ENCODE measurements at regions of chr22 and their contacts with region 1.

Region 1: DNA sequence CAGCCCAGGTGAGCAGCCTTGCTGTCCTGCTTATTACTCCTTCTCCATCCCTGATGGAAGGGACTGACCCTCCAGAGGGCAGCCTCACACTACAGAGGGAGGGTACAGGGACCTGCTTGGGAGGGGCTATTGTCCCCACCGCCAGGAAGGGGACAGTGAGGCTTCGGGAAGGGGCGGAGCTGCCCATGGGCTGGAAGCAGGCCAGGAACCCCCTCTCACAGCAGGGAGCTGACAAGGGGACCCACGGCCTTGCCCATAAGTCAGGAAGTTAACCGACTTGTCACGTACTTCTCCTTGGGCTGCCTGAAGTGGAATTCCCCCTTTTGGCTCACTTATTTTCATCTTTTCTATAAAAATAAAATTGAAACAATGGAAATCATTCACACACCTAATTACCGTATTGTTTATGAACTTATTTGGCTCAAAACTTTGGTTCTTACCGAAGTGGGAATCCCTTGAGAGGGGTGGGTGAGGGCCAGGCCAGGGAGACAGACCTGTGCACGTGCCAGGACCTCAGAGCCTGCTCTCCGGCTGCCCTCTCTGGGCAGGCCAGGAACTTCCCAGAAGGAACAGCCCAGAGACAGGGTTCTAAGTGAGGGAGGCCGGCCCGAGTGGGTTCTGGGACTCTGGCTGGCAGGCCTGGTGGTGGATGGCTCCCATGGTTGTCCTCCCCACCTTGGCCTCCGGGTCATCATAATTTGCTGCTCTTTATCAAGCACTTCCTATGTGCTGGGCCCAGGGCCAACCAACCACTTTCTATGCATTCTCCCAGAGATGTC is 5.8 kb downstream of the MGAT3 start:
- DNase-seq: peak; percentile 52 to 83 (median 67)
- ATAC-seq: peak; percentile 67
- H3K4me3 ChIP-seq: no peak overlapping the region
- H3K27ac ChIP-seq: peak overlapping the region; percentile 63
- H3K4me1 ChIP-seq: peaks cover 47 to 78% of the 10 kb centered on the region in 2 experiments
- H3K27me3 ChIP-seq: no peaks in the 10 kb centered on the region
- CTCF ChIP-seq: peak; percentile 44 to 58 (median 53); a peak in 5 of 6 replicates
- EP300 ChIP-seq: no peak
- POLR2A ChIP-seq: no peak
- RAD21 ChIP-seq: peak; percentile 41 to 66; a peak in 3 of 4 replicates

Region 2: DNA sequence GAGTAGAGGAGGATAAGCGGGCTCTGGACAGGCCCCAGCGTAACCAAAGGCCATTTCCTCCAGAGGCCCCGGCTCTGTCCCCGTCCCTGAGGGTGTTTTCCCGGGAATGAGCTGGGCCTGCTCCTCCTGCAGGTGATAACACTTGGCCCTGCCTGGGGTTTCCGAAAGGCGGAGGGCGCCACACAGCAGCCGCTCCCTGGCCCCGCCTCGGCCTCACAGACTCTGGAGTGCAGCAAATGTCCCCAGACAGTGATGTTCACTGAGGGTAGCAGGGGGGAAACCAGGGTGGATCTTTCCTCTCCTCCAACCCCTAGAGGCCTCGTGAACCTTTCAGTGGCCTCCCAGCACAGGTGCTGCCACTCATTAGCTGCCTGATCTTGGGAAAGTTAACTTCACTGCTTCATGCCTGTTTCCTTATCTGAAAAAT is 16.3 kb before region 1 on chr22:
- CTCF ChIA-PET with region 1: no interaction called
- POLR2A ChIA-PET with region 1: no interaction called
- in situ Hi-C with region 1: no loop called
- intact Hi-C with region 1: no loop called
- DNase-seq: peak; percentile 42 to 53 (median 43)
- ATAC-seq: peak; percentile 86
- H3K4me3 ChIP-seq: no peak overlapping the region
- H3K27ac ChIP-seq: no peak overlapping the region
- H3K4me1 ChIP-seq: peaks cover 6 to 48% of the 10 kb centered on the region in 2 experiments; a peak in 4 of 5 replicates
- H3K27me3 ChIP-seq: no peaks in the 10 kb centered on the region
- CTCF ChIP-seq: peak in 2 of 3 experiments; percentile 32 to 40; a peak in 4 of 6 replicates
- EP300 ChIP-seq: no peak
- POLR2A ChIP-seq: no peak
- RAD21 ChIP-seq: 0 out of 4 replicates have a peak, but pooled peaks of 1 of the 2 experiments have one; percentile 10

Region 3: GRCh38 chr22:39490135-39490798 is 27.6 kb after region 1 on chr22:
- CTCF ChIA-PET with region 1: no interaction called
- POLR2A ChIA-PET with region 1: interaction called, 3 read pairs
- in situ Hi-C with region 1: no loop called
- intact Hi-C with region 1: loop called (anchors 2 kb)
- DNase-seq: peak; percentile 82 to 90 (median 84)
- ATAC-seq: peak; percentile 95
- H3K4me3 ChIP-seq: no peak overlapping the region
- H3K27ac ChIP-seq: no peak overlapping the region; the same call in 2 of the 3 replicates
- H3K4me1 ChIP-seq: peaks cover 37 to 49% of the 10 kb centered on the region in 2 experiments
- H3K27me3 ChIP-seq: no peaks in the 10 kb centered on the region
- CTCF ChIP-seq: no peak
- EP300 ChIP-seq: no peak
- POLR2A ChIP-seq: no peak
- RAD21 ChIP-seq: no peak